Adrenal gland (tissue), 19 donors: ENCODE measurements at regions of chr4 and their contacts with region 1.

Region 1: DNA sequence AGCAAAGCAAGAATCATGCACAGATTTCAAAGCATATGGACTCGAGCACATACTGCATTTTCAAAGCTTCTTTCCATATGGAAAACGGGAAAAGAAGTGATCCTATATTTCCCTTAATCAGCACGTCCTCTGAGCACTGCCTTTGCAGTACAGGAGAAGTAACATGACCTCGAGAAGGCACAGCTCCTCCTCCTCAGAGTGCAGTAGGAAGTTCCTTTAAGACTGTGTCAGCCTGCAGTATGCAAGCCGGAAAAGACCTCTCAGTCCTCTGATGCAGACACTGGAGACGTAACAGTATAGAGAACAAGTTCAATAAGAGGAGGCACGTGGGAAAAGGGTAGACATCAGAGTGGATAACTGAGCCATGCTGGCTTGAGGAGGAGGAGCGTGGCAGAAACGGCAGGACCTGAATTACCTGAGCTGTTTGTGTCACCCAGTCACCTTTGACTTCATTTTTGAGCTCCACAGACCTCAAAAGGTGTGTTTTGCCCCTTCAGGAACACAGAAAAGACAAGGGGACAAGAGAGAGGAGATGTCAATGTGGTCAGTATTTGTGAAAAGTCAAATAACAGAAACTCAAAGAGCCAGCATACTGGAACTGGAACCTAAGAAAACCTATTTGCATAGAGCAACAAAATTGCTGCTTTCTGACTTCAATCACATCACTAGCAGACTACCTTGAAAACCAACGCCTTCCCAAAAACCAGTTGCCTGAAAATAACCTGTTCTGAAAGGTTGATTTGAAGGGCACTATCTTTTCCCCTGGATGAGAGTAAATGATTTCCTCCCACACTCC is 20.8 kb downstream of the IRF2 start:
- DNase-seq: peak in 5 of 7 donors; percentile 37 to 72 (median 56)
- H3K4me3 ChIP-seq: peak overlapping the region in 1 of 4 donors; percentile 27
- H3K27ac ChIP-seq: peak overlapping the region; percentile 14 to 82 (median 65)
- H3K4me1 ChIP-seq: peaks cover 36 to 71% of the 10 kb centered on the region in 2 donors
- H3K27me3 ChIP-seq: no peaks in the 10 kb centered on the region
- CTCF ChIP-seq: no peak
- POLR2A ChIP-seq: peak in 1 of 2 donors; percentile 30

Region 2: DNA sequence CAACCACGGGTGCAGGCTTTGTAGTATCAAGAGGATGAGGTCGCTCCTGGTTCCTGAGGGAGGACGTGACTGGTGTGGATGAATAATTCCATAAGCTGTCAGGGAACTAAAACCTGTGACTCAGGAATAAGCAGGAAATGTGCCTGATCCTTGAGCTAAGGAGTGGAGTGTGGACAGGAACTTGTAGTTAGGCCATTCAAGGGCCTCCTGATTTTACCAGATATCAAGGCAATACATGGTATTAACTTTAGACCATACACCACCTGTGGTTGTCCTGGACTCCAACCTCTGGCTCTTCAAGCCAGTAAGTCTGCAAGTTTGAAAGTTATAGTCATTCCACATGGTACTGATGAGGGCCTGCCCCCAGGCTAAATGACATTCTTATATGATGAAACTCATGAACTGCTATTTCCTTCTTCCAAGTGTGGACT is 960.8 kb before region 1 on chr4:
- intact Hi-C with region 1: no loop called
- DNase-seq: no peak
- H3K4me3 ChIP-seq: no peak overlapping the region
- H3K27ac ChIP-seq: no peak overlapping the region
- H3K4me1 ChIP-seq: no peaks in the 10 kb centered on the region
- H3K27me3 ChIP-seq: no peaks in the 10 kb centered on the region
- CTCF ChIP-seq: no peak
- POLR2A ChIP-seq: no peak

Region 3: DNA sequence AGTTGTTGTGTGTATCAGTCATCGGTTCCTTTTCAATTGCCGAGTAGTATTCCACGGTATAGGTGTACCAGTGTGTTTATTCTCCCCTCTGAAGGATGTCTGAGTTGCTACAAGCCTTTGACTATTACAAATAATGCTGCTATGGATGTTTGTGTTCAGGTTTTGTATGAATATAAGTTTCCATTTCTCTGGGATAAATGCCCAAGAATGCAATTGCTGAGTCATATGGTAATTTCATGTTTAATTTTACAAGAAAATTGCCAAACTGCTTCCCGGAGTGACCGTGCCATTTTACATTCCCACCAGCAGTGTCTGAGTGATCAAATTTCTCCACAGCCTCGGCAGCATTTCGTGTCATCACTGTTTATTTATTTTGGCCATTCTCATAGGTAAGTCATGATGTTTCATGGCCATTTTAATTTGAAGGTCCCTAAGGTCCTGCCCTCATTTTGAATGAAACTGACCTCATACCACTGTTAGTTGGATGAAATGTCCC is 53.1 kb before region 1 on chr4:
- intact Hi-C with region 1: loop called in 1 of 2 experiments (anchors 10 kb)
- DNase-seq: peak in 6 of 7 donors; percentile 60 to 82 (median 76)
- H3K4me3 ChIP-seq: no peak overlapping the region
- H3K27ac ChIP-seq: peak overlapping the region; percentile 67 to 93 (median 83)
- H3K4me1 ChIP-seq: peaks cover 28 to 73% of the 10 kb centered on the region in 2 donors
- H3K27me3 ChIP-seq: no peaks in the 10 kb centered on the region
- CTCF ChIP-seq: peak in 5 of 6 experiments; percentile 2 to 43 (median 33)
- POLR2A ChIP-seq: peak in 1 of 2 donors; percentile 30